ENCODE measurements at regions of chr11 and their contacts with region 1.

Region 1: DNA sequence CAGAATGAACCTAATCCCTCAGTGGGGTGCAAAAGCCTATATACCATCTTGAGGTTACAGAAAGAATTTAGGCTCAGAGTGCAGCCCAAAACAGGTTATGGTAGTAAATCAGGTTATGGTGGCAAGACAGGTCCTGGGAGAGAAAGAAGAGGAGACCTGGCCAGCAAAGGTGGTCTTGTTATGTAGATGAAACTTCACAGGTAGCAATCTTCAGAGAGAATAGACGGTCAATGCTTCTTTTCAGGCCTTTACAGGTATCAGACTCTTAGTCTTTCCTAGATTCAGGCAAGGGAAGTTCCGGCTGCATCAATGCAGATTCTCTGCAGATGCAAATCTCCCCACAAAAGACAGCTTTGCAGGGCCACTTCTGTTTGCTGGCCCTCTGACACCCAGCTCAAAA is 45.8 kb upstream of the SORL1 start:
- DNase-seq: peak; percentile 75
- H3K4me3 ChIP-seq: peak overlapping the region; percentile 56
- H3K27ac ChIP-seq: peak overlapping the region; percentile 92
- H3K4me1 ChIP-seq: peaks cover 71% of the 10 kb centered on the region
- CTCF ChIP-seq: no peak

Region 2: DNA sequence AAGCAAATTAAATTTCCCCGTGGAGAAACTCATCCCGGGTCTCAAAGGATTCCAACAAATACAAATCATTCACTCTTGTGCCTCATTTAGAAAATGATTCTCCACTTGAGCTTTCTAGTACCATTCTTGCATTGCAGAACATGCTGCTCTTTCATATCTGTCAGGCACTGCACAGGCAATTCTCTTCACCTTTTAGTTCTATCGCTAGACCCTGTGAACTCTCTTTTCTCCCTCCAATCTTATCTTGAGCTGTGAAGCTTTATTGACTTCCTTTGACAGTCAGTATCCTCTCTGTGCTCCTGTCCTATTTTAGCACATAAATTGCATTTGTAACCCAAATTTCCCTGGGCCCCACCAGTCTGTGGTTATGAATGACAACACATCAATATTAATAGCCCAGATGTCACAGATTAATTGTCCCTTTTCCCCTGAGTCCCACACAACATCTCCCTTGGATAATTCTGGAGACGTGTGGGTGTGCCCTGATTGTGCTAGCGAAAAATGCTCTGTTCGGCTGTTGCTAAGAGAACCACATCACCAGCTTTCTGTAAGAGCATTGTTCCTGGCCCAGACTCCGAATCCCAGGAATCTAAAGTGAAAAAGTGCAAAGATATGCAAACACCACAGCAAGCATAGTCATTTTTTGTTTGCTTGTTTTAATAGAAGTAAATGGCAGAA is 136.2 kb before region 1 on chr11:
- CTCF ChIA-PET with region 1: no interaction called
- POLR2A ChIA-PET with region 1: no interaction called
- intact Hi-C with region 1: no loop called
- DNase-seq: no peak
- H3K4me3 ChIP-seq: no peak overlapping the region
- H3K27ac ChIP-seq: no peak overlapping the region
- H3K4me1 ChIP-seq: no peaks in the 10 kb centered on the region
- CTCF ChIP-seq: no peak

Region 3: GRCh38 chr11:121383716-121384115 is 22.6 kb before region 1 on chr11:
- CTCF ChIA-PET with region 1: interaction called, 10 read pairs
- POLR2A ChIA-PET with region 1: interaction called, 74 read pairs
- intact Hi-C with region 1: no loop called
- DNase-seq: no peak
- H3K4me3 ChIP-seq: no peak overlapping the region
- H3K27ac ChIP-seq: peak overlapping the region; percentile 84
- H3K4me1 ChIP-seq: peaks cover 92% of the 10 kb centered on the region
- CTCF ChIP-seq: no peak

Region 4: DNA sequence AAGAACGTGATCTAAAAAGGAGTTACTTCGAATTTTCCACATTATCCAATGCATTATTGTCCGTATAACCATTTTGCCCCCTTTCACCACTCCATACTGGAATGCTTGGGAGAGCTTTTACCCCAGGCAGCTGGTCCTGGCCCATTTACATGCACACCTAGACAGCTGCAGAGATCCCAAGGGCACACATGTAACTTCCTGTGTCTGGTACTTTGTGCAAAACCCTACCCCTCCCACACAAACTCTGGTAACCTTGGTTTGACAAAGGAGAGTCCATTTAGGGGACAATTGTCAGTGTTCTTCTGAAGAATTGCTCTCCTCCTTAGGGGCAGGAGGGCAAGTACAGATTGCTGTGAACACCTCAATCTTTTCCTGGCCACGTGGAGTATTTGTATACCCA is 11.5 kb before region 1 on chr11:
- CTCF ChIA-PET with region 1: interaction called, 11 read pairs
- POLR2A ChIA-PET with region 1: interaction called, 74 read pairs
- intact Hi-C with region 1: no loop called
- DNase-seq: peak; percentile 74
- H3K4me3 ChIP-seq: no peak overlapping the region
- H3K27ac ChIP-seq: peak overlapping the region; percentile 55
- H3K4me1 ChIP-seq: peaks cover 63% of the 10 kb centered on the region
- CTCF ChIP-seq: no peak

Region 5: GRCh38 chr11:121426476-121427399 is 20.4 kb after region 1 on chr11:
- CTCF ChIA-PET with region 1: no interaction called
- POLR2A ChIA-PET with region 1: interaction called, 104 read pairs
- intact Hi-C with region 1: loop called (anchors 2 kb)
- DNase-seq: peak; percentile 84
- H3K4me3 ChIP-seq: peak overlapping the region; percentile 44
- H3K27ac ChIP-seq: peak overlapping the region; percentile 99
- H3K4me1 ChIP-seq: peaks cover 98% of the 10 kb centered on the region
- CTCF ChIP-seq: peak; percentile 67

Region 6: DNA sequence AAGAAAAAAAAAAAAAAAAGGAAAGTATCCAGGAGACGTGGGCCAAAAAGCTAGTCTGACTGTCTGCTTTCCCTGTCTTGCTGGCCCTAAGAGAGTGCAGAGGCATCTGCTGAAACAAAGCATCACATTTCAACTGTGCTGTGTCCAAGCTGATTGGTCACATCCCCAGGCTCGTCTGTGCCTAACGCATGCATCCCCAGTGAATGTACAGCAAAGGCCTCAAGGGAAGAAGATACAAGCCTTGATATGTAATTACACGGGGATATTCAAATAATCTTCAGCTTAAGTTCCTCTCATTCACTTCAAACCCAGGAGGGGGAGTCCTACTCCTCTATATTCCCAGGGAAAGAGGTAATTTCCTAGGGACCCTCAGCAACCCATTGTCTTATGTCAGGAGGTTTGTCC is 40.5 kb after region 1 on chr11:
- CTCF ChIA-PET with region 1: no interaction called
- POLR2A ChIA-PET with region 1: interaction called, 20 read pairs
- intact Hi-C with region 1: no loop called
- DNase-seq: peak; percentile 86
- H3K4me3 ChIP-seq: peak overlapping the region; percentile 60
- H3K27ac ChIP-seq: peak overlapping the region; percentile 97
- H3K4me1 ChIP-seq: peaks cover 91% of the 10 kb centered on the region
- CTCF ChIP-seq: peak; percentile 71

Measured in OCI-LY7 (cell line).